ENCODE measurements at regions of chr3 and their contacts with region 1.

Region 1: DNA sequence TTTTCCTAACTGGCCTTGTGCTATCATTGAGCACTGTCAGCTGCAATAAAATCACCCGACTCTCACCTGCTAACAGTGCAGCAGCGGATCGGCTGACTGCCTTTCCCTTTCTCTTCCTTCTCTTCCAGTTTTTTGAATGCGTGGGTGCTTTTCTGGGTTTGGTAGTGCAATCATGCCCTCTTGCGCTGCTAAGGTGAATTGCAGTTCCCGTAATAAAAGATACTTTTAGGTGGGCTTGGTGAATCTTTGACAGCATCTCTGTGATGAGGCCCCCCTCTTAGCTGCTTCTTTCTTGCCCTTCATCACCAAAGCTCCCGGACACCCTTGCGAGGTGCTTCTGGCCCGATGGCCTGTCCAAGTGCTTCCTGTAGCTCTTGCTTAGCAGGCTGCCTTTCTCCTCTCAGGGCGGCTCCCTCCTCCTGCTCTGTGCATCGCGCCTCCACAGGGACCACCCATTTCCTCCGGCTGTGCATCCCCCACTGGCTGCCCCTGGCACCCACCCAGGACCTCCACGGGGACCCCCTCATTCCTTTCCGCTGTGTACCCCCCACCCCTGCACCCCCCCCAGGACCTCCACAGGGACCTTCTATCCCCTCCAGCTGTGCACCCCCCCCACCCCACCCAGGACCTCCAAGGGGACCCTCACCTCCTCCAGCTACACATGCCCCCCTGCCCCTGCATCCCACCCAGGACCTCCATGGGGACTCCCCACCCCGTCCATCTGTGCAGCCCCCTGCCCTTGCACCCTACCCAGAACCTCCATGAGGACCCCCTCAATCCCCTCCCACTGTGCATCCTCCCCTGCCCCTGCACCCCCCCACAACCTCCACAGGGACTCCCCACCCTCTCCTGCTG is 50.8 kb upstream of the RPL32 start:
- DNase-seq: peak; percentile 80
- H3K4me3 ChIP-seq: peak overlapping the region; percentile 21 to 31; a peak in 2 of 4 replicates
- H3K27ac ChIP-seq: no peak overlapping the region
- H3K4me1 ChIP-seq: peaks cover 0 to 7% of the 10 kb centered on the region in 2 experiments; a peak in 1 of 4 replicates
- H3K27me3 ChIP-seq: peaks cover 5% of the 10 kb centered on the region; the same call in 1 of the 2 replicates
- CTCF ChIP-seq: peak; percentile 91
- EP300 ChIP-seq: no peak
- RAD21 ChIP-seq: peak; percentile 97

Region 2: GRCh38 chr3:12830785-12831156 is 61.4 kb before region 1 on chr3:
- CTCF ChIA-PET with region 1: interaction called, 13 read pairs
- POLR2A ChIA-PET with region 1: no interaction called
- DNase-seq: no peak
- H3K4me3 ChIP-seq: no peak overlapping the region
- H3K27ac ChIP-seq: no peak overlapping the region; a peak in 1 of 4 replicates
- H3K4me1 ChIP-seq: no peaks in the 10 kb centered on the region
- H3K27me3 ChIP-seq: no peaks in the 10 kb centered on the region
- CTCF ChIP-seq: peak; percentile 23; the same call in 1 of the 2 replicates
- EP300 ChIP-seq: no peak
- RAD21 ChIP-seq: no peak

Region 3: DNA sequence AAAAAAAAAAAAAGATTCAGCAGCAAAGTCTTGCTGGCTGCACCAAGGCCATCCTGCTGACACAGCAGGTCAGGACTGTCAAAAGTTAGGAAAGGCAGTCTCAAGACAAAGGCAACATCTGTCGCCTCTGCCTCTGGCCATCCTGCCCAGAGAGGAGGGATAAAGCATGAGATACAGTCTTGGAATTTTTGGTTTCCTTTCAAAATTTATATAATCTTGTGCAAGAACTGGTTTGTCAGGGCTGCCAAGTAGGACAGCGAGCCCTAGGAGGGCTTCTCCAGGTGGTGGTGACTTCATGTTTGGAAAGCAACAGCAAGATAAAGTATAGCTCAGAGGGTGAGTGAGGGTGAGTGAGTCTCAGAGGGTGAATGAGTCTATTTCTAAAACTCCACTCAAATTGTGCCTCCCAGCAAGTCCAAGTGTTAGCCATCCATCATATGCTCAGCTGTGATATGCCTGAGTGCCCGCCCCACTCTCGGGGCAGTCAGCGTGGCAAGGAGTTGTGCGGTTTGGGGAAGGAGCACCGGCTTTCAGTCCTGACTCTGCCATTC is 38.9 kb before region 1 on chr3:
- CTCF ChIA-PET with region 1: interaction called, 19 read pairs
- POLR2A ChIA-PET with region 1: no interaction called
- DNase-seq: no peak
- H3K4me3 ChIP-seq: no peak overlapping the region
- H3K27ac ChIP-seq: no peak overlapping the region
- H3K4me1 ChIP-seq: no peaks in the 10 kb centered on the region; a peak in 1 of 4 replicates
- H3K27me3 ChIP-seq: no peaks in the 10 kb centered on the region; the same call in 1 of the 2 replicates
- CTCF ChIP-seq: no peak
- EP300 ChIP-seq: no peak
- RAD21 ChIP-seq: no peak

Region 4: DNA sequence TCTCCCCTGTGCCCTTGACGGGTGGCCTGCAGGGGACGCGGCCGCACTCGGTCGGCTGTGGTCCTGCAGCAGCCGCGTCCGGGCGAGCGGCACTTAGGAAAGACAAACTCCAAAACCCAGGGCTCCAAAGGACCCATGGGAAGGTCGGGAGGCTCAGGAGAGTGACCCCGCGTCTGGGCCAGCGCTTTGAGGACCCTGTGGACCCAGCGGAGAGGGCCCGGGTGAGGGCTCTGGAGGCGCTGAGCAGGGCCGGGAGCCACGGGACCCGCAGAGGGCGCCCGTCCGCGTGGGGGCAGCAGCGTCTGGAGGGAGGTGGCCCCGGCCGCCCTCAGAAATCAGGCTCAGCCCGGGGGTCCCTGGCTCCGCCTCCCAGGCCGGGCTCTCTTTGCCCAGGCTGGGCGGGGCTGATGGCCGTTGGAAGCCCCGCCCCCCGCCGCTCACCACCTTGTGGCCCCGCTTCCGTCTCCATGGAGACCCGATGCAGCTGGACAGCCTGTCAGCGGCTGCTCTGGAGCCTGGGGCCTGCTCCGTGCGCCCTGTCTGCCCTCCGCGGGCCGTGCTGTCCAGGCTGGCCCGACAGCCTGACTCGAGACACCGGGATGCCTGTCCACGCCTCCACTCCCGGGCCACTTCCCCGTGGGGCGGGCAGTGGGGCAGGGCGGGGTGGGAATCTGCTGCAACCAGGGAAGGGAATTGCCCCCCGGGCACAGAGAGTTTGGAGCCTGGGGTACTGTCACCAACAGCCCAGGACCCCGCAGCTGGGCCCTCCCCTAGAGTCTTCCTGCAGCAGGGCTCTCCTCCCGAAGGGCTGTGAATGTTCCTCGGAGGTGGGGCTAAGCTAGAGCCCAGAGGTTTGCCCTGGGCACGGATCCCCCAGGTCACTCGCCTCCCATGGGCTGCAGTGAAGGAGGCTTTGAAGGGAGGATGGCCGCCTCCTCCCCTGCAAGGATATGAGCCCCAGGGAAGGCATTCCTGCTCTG is 16.1 kb before region 1 on chr3:
- CTCF ChIA-PET with region 1: interaction called, 150 read pairs
- POLR2A ChIA-PET with region 1: no interaction called
- DNase-seq: peak; percentile 93
- H3K4me3 ChIP-seq: peak overlapping the region in 1 of 2 experiments; percentile 30; a peak in 2 of 4 replicates
- H3K27ac ChIP-seq: no peak overlapping the region
- H3K4me1 ChIP-seq: peaks cover 0 to 16% of the 10 kb centered on the region in 2 experiments; a peak in 1 of 4 replicates
- H3K27me3 ChIP-seq: no peaks in the 10 kb centered on the region; the same call in 1 of the 2 replicates
- CTCF ChIP-seq: no peak
- EP300 ChIP-seq: no peak
- RAD21 ChIP-seq: no peak

Region 5: DNA sequence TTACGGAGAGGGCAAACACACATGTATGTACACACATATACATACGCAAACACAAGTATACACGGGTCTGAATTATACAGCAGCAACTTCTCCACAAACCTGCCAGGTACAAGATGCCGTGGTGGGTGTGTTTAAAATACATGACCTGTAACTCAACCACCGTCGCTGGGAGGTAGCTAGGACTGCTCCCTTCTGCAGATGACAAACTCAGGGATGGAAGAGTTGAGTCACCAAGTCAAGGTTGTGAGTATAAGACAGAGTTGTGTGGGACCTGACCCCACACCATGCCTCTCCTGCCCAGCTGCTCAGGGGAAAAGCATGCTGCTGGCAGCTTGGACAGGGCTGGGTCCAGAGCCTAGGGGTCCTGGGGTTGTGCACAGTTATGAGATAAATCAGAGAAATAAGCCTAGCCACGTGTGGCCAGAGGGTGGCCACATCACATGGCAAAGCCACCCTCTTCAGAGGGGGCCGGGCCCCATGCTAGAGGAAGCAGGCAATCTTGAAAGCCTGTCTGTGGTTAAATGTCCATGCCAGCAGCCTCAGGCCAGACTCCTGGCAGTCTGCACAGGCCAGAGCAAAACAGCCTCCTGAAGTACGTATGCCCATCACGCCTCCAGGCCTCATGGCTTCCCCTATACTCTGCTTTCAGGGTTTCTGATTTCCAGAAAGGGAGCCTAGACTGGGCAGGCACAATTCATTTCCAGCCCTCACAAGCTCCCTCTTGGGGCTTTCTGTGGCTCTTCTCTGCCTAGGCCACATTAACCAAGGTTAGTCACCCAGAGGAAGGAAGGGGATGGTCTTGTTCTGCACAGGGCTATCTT is 56.9 kb after region 1 on chr3:
- CTCF ChIA-PET with region 1: interaction called, 12 read pairs
- POLR2A ChIA-PET with region 1: no interaction called
- DNase-seq: no peak
- H3K4me3 ChIP-seq: no peak overlapping the region
- H3K27ac ChIP-seq: peak overlapping the region; percentile 2 to 51; a peak in 2 of 4 replicates
- H3K4me1 ChIP-seq: peaks cover 20 to 72% of the 10 kb centered on the region in 2 experiments; a peak in 3 of 4 replicates
- H3K27me3 ChIP-seq: no peaks in the 10 kb centered on the region
- CTCF ChIP-seq: no peak
- EP300 ChIP-seq: no peak
- RAD21 ChIP-seq: no peak

Region 6: GRCh38 chr3:12984023-12984823 is 92.0 kb after region 1 on chr3:
- CTCF ChIA-PET with region 1: interaction called, 30 read pairs
- POLR2A ChIA-PET with region 1: no interaction called
- DNase-seq: peak; percentile 80
- H3K4me3 ChIP-seq: peak overlapping the region in 1 of 2 experiments; percentile 7; a peak in 1 of 4 replicates
- H3K27ac ChIP-seq: no peak overlapping the region; a peak in 1 of 4 replicates
- H3K4me1 ChIP-seq: peaks cover 0 to 27% of the 10 kb centered on the region in 2 experiments; a peak in 1 of 4 replicates
- H3K27me3 ChIP-seq: no peaks in the 10 kb centered on the region
- CTCF ChIP-seq: peak; percentile 77
- EP300 ChIP-seq: no peak
- RAD21 ChIP-seq: peak; percentile 84

Measured in SK-N-SH (cell line).